ENCODE measurements at regions of chr4 and their contacts with region 1.

Region 1: GRCh38 chr4:56907489-56908205 is at the start of gene REST:
- DNase-seq: peak; percentile 68 to 95 (median 82)
- ATAC-seq: peak; percentile 64
- H3K4me3 ChIP-seq: peak within 1 kb of the TSS; percentile 98
- H3K4me3 Mint-ChIP-seq: peak within 1 kb of the TSS; percentile 92
- H3K27ac ChIP-seq: peak within 1 kb of the TSS; percentile 22 to 94
- H3K27ac Mint-ChIP-seq: peak within 1 kb of the TSS; percentile 84
- H3K4me1 ChIP-seq: peaks cover 33% of the 10 kb centered on the region
- H3K4me1 Mint-ChIP-seq: peaks cover 52% of the 10 kb centered on the region
- H3K27me3 ChIP-seq: no peaks in the 10 kb centered on the region
- H3K27me3 Mint-ChIP-seq: no peaks in the 10 kb centered on the region
- CTCF ChIP-seq: no peak
- total RNA-seq, gene REST: 56.8 to 57.6 TPM

Region 2: DNA sequence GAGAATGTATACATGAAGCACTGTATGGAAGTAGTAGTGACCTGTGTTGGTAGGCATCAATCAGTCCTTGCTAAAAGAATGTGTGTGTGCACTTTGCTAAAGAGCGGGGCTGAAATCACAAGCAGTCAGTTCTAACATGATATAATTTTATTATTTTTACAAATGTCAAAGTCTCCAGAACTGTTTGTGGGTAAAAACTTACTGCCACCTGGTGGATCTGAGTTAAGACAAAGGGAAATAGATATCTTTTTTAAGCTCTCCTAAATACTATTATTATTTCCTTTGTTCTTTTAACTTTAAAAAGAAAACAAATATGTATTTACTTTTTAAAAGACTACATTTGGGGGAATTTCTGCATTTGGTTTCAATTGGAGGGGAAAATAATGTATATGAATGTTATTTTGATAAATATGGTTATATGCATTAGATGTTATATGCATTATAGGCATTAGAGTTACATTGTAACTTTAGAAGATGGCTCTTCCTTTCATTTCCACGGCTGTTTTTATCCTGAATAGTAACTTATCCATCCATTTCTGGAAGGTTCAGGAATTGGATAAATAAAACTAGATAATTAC is 1353.1 kb before region 1 on chr4:
- CTCF ChIA-PET with region 1: no interaction called
- POLR2A ChIA-PET with region 1: no interaction called
- intact Hi-C with region 1: loop called in 1 of 2 experiments (anchors 5 kb)
- DNase-seq: peak in 4 of 14 experiments; percentile 10 to 65 (median 62)
- ATAC-seq: peak; percentile 55
- H3K4me3 ChIP-seq: no peak overlapping the region
- H3K4me3 Mint-ChIP-seq: no peak overlapping the region
- H3K27ac ChIP-seq: no peak overlapping the region
- H3K27ac Mint-ChIP-seq: no peak overlapping the region
- H3K4me1 ChIP-seq: no peaks in the 10 kb centered on the region
- H3K4me1 Mint-ChIP-seq: no peaks in the 10 kb centered on the region
- H3K27me3 ChIP-seq: no peaks in the 10 kb centered on the region
- H3K27me3 Mint-ChIP-seq: peaks cover 4% of the 10 kb centered on the region
- CTCF ChIP-seq: peak; percentile 78

Region 3: DNA sequence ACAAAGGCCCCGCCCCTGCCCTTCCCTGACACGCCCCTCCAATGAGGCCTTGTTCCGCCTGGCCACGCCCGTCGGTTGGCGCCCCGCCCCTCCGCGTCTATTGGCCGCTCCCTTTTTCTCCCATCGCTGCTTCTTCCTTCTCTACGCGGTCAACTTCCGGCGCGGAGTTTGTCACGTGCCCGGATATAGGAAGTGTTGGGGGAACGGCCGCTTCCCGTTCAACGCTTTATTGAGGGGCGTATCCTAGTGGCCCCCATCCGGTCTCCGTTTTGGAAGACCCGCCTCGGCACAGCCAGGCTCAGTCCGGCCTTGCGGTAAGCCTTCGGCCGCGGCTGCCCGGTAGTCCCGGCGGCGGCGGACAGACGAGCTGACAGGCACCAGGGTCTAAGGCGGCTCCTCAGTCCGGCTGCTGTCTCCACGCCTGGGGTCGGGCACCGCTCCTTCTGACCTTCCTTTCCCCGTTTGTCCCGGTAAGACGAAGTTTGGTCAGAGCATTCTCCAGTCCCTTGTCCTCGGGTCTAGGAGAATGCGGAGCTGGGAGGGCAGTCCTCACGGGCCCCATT is 1054.1 kb before region 1 on chr4 and contains the start of gene EXOC1:
- CTCF ChIA-PET with region 1: no interaction called
- POLR2A ChIA-PET with region 1: interaction called, 3 read pairs
- intact Hi-C with region 1: loop called in 1 of 2 experiments (anchors 10 kb)
- DNase-seq: peak; percentile 93 to 99 (median 97)
- ATAC-seq: peak; percentile 95
- H3K4me3 ChIP-seq: peak within 1 kb of the TSS; percentile 96
- H3K4me3 Mint-ChIP-seq: no peak within 1 kb of the TSS
- H3K27ac ChIP-seq: peak within 1 kb of the TSS; percentile 68 to 86
- H3K27ac Mint-ChIP-seq: peak within 1 kb of the TSS; percentile 60
- H3K4me1 ChIP-seq: peaks cover 28% of the 10 kb centered on the region
- H3K4me1 Mint-ChIP-seq: peaks cover 33% of the 10 kb centered on the region
- H3K27me3 ChIP-seq: no peaks in the 10 kb centered on the region
- H3K27me3 Mint-ChIP-seq: no peaks in the 10 kb centered on the region
- CTCF ChIP-seq: no peak
- total RNA-seq, gene EXOC1: 15.2 to 15.7 TPM

Region 4: GRCh38 chr4:56387023-56388001 is 520.3 kb before region 1 on chr4 and contains the start of gene AASDH:
- CTCF ChIA-PET with region 1: no interaction called
- POLR2A ChIA-PET with region 1: interaction called, 35 read pairs
- intact Hi-C with region 1: loop called (anchors 5 kb)
- DNase-seq: peak; percentile 85 to 99 (median 96)
- ATAC-seq: peak; percentile 86
- H3K4me3 ChIP-seq: peak within 1 kb of the TSS; percentile 97
- H3K4me3 Mint-ChIP-seq: peak within 1 kb of the TSS; percentile 93
- H3K27ac ChIP-seq: peak within 1 kb of the TSS; percentile 91 to 97
- H3K27ac Mint-ChIP-seq: peak within 1 kb of the TSS; percentile 99
- H3K4me1 ChIP-seq: peaks cover 17% of the 10 kb centered on the region
- H3K4me1 Mint-ChIP-seq: peaks cover 46% of the 10 kb centered on the region
- H3K27me3 ChIP-seq: no peaks in the 10 kb centered on the region
- H3K27me3 Mint-ChIP-seq: no peaks in the 10 kb centered on the region
- CTCF ChIP-seq: no peak
- total RNA-seq, gene AASDH: 10.2 to 10.6 TPM

Region 5: DNA sequence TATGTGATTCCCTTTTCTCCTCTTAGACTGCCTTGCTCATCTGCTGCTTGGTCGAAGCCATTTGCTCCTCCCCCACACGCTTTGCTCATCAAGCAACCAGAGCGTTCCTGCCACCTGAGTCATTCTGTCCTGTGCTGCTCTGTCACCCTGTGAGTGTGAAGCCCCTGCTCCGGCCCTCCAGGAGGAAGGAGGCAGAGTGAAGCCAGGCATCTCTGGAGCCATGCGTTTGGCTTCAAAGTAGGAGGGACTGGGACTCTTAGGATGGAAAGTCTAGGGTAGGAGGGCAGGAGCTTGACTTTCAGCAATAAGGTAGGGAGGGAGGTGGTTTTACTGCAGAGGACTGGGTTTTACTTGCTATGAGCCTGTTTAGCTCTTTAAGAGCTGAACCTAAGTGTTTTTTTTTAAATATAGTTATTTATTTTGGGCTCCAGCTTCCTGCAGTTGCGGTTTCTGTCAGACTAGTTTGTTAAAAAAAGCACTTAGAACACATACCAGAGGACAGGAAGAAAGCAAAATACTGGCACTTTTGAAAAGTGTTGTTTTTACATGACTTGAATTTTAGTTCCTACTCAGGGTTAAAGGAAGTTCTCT is 149.7 kb before region 1 on chr4:
- CTCF ChIA-PET with region 1: no interaction called
- POLR2A ChIA-PET with region 1: interaction called, 7 read pairs
- intact Hi-C with region 1: loop called in 1 of 2 experiments (anchors 5 kb)
- DNase-seq: peak; percentile 35 to 85 (median 58)
- ATAC-seq: peak; percentile 81
- H3K4me3 ChIP-seq: peak overlapping the region; percentile 36
- H3K4me3 Mint-ChIP-seq: peak overlapping the region; percentile 83
- H3K27ac ChIP-seq: peak overlapping the region; percentile 71 to 75
- H3K27ac Mint-ChIP-seq: peak overlapping the region; percentile 89
- H3K4me1 ChIP-seq: peaks cover 44% of the 10 kb centered on the region
- H3K4me1 Mint-ChIP-seq: peaks cover 62% of the 10 kb centered on the region
- H3K27me3 ChIP-seq: no peaks in the 10 kb centered on the region
- H3K27me3 Mint-ChIP-seq: no peaks in the 10 kb centered on the region
- CTCF ChIP-seq: no peak

Region 6: GRCh38 chr4:56821381-56822243 is 86.0 kb before region 1 on chr4 and contains the start of gene SPINK2:
- CTCF ChIA-PET with region 1: no interaction called
- POLR2A ChIA-PET with region 1: interaction called, 4 read pairs
- intact Hi-C with region 1: loop called in 1 of 2 experiments (anchors 5 kb)
- DNase-seq: peak; percentile 53 to 90 (median 71)
- ATAC-seq: peak; percentile 96
- H3K4me3 ChIP-seq: peak within 1 kb of the TSS; percentile 63
- H3K4me3 Mint-ChIP-seq: peak within 1 kb of the TSS; percentile 85
- H3K27ac ChIP-seq: no peak within 1 kb of the TSS
- H3K27ac Mint-ChIP-seq: peak within 1 kb of the TSS; percentile 76
- H3K4me1 ChIP-seq: peaks cover 33% of the 10 kb centered on the region
- H3K4me1 Mint-ChIP-seq: peaks cover 36% of the 10 kb centered on the region
- H3K27me3 ChIP-seq: no peaks in the 10 kb centered on the region
- H3K27me3 Mint-ChIP-seq: no peaks in the 10 kb centered on the region
- CTCF ChIP-seq: peak; percentile 48
- total RNA-seq, gene SPINK2: 4.0 to 5.2 TPM

Region 7: GRCh38 chr4:56892691-56893090 is 15.0 kb before region 1 on chr4:
- CTCF ChIA-PET with region 1: no interaction called
- POLR2A ChIA-PET with region 1: no interaction called
- intact Hi-C with region 1: no loop called
- DNase-seq: no peak
- ATAC-seq: no peak
- H3K4me3 ChIP-seq: no peak overlapping the region
- H3K4me3 Mint-ChIP-seq: no peak overlapping the region
- H3K27ac ChIP-seq: no peak overlapping the region
- H3K27ac Mint-ChIP-seq: no peak overlapping the region
- H3K4me1 ChIP-seq: no peaks in the 10 kb centered on the region
- H3K4me1 Mint-ChIP-seq: no peaks in the 10 kb centered on the region
- H3K27me3 ChIP-seq: no peaks in the 10 kb centered on the region
- H3K27me3 Mint-ChIP-seq: no peaks in the 10 kb centered on the region
- CTCF ChIP-seq: no peak